CD4-positive, alpha-beta T cell (primary cell): ENCODE measurements at regions of chr17 and their contacts with region 1.

Region 1: GRCh38 chr17:7856883-7857723 is at the start of gene NAA38:
- DNase-seq: peak; percentile 86 to 99 (median 91)
- ATAC-seq: peak; percentile 82
- H3K4me3 ChIP-seq: peak within 1 kb of the TSS; percentile 74
- H3K4me3 Mint-ChIP-seq: no peak within 1 kb of the TSS
- H3K27ac ChIP-seq: peak within 1 kb of the TSS; percentile 84 to 96
- H3K27ac Mint-ChIP-seq: no peak within 1 kb of the TSS
- H3K4me1 ChIP-seq: peaks cover 39% of the 10 kb centered on the region
- H3K4me1 Mint-ChIP-seq: peaks cover under 1% of the 10 kb centered on the region
- H3K27me3 ChIP-seq: no peaks in the 10 kb centered on the region
- H3K27me3 Mint-ChIP-seq: no peaks in the 10 kb centered on the region
- CTCF ChIP-seq: no peak
- total RNA-seq, gene NAA38: 15.4 to 16.3 TPM

Region 2: GRCh38 chr17:7035591-7036368 is 821.3 kb before region 1 on chr17 and contains the start of gene SLC16A13:
- CTCF ChIA-PET with region 1: no interaction called
- POLR2A ChIA-PET with region 1: no interaction called
- intact Hi-C with region 1: loop called in 1 of 2 experiments (anchors 10 kb)
- DNase-seq: peak; percentile 94 to 100 (median 98)
- ATAC-seq: peak; percentile 90
- H3K4me3 ChIP-seq: peak within 1 kb of the TSS; percentile 99
- H3K4me3 Mint-ChIP-seq: peak within 1 kb of the TSS; percentile 91
- H3K27ac ChIP-seq: peak within 1 kb of the TSS; percentile 84 to 93
- H3K27ac Mint-ChIP-seq: peak within 1 kb of the TSS; percentile 99
- H3K4me1 ChIP-seq: peaks cover 57% of the 10 kb centered on the region
- H3K4me1 Mint-ChIP-seq: peaks cover 63% of the 10 kb centered on the region
- H3K27me3 ChIP-seq: no peaks in the 10 kb centered on the region
- H3K27me3 Mint-ChIP-seq: no peaks in the 10 kb centered on the region
- CTCF ChIP-seq: no peak
- total RNA-seq, gene SLC16A13: 2.3 to 2.4 TPM

Region 3: DNA sequence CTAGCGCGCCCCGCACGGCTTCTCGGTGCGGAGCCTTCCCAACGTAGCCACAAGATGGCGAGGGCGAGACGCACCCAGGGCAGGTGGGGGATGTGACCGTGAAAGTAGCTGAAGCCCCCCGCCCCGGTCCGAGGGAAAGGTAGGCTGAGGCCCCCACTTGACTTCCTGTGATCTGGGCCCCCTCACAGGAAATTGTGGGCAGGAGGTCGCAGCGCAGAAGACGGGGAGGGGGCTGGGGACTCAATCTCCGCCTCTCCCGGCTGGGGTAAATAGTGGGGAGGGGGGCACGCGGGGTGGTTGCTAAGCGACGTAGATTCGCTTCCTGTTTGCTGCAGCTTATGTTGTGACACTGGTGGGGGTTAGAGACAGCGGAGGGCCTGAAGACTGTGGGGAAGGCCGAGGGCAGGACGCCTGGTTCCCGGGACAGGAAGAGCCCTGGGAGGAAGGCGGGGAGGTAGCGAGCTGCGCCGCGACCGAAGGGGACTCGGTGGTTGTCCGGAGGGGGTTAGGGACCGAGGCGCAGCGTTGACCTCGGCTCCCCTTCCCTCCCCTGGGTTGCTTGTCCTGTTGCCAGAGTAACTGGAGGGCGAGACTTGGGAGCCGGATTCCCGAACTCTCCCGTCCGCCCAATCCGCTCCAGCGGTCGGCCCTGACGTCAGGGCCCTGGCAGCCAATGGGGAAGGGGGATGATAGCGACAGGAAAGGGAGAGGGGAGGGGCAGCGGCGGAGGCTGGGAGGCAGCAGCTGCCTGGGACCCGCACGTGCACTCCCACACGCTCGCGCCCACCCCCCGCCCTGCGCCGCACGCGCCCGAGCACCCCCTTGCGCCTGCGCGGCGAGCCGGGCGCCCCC is 21.9 kb before region 1 on chr17:
- CTCF ChIA-PET with region 1: interaction called, 13 read pairs
- POLR2A ChIA-PET with region 1: interaction called, 79 read pairs
- intact Hi-C with region 1: loop called (anchors 1 kb)
- DNase-seq: peak; percentile 74 to 98 (median 86)
- ATAC-seq: peak; percentile 54
- H3K4me3 ChIP-seq: peak overlapping the region; percentile 82
- H3K4me3 Mint-ChIP-seq: peak overlapping the region; percentile 93
- H3K27ac ChIP-seq: peak overlapping the region; percentile 98 to 100
- H3K27ac Mint-ChIP-seq: peak overlapping the region; percentile 98
- H3K4me1 ChIP-seq: peaks cover 62% of the 10 kb centered on the region
- H3K4me1 Mint-ChIP-seq: peaks cover 42% of the 10 kb centered on the region
- H3K27me3 ChIP-seq: no peaks in the 10 kb centered on the region
- H3K27me3 Mint-ChIP-seq: peaks cover 4% of the 10 kb centered on the region
- CTCF ChIP-seq: peak; percentile 84

Region 4: DNA sequence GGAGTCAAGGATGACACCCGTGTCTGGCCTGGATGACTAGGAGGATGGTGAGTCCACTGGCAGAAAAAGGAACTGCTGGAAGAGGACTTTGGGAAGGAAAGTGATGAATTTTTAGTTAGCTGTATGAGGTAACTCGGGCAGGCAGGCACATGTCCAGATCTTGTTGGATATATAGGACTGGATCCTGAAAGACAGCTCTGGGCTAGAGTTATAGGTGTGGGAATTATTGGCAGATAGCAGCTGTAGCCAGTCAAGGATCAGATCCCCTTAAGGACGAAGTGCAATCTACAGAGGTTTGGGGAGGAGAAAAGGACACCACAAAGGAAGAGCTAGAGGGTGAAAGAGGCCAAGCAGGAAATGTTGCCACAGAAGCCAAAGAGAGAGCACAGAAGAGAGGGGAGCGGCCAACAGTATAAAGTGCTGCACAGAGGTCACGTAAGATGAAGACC is 10.8 kb after region 1 on chr17:
- CTCF ChIA-PET with region 1: interaction called, 11 read pairs
- POLR2A ChIA-PET with region 1: interaction called, 20 read pairs
- intact Hi-C with region 1: no loop called
- DNase-seq: peak in 3 of 14 experiments; percentile 38 to 49 (median 47)
- ATAC-seq: peak; percentile 78
- H3K4me3 ChIP-seq: peak overlapping the region; percentile 26
- H3K4me3 Mint-ChIP-seq: peak overlapping the region; percentile 9
- H3K27ac ChIP-seq: peak overlapping the region in 1 of 2 donors; percentile 52
- H3K27ac Mint-ChIP-seq: peak overlapping the region; percentile 62
- H3K4me1 ChIP-seq: peaks cover 20% of the 10 kb centered on the region
- H3K4me1 Mint-ChIP-seq: peaks cover 32% of the 10 kb centered on the region
- H3K27me3 ChIP-seq: no peaks in the 10 kb centered on the region
- H3K27me3 Mint-ChIP-seq: no peaks in the 10 kb centered on the region
- CTCF ChIP-seq: no peak

Region 5: DNA sequence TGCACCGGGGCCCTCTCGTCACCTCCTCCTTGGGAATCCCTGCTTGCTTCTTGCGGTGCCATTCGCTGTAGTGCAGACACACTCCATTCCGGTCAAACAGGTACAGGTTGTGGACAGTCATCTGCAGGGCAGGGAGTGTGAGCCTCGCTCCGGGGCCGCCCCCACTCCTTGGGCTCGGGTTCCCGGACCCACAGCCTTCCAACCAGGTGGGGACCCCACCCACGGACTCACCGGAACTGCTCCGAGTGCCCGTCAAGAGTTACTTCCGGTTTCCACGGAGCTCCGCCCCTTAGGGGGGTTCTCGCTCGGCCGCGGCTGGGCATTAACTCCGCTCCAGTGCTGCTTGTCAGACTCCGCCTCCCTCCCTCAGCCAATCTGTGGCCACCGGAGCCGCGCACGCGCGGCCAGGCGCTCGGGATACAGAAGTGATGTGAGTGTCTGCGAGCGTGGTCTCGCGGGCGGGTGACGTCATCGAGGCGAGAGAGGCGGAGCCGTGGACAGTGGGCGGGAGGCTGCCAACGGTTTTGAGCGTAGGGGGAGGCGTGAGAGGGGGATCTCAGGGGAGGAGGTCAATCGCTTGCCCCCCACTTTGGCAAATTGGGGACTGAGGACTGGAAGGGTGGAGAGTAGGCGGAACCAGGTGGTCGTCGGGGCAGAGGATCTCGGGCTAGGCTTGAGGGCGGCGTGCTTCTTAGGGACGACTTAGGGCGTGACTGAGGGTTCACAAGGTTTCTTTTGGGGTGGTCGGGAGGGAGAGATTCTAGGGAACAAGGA is 74.8 kb after region 1 on chr17 and contains the starts of genes CNTROB and TRAPPC1:
- CTCF ChIA-PET with region 1: no interaction called
- POLR2A ChIA-PET with region 1: interaction called, 19 read pairs
- intact Hi-C with region 1: no loop called
- DNase-seq: peak; percentile 97 to 100 (median 99)
- ATAC-seq: peak; percentile 92
- H3K4me3 ChIP-seq: peak within 1 kb of the TSS; percentile 94
- H3K4me3 Mint-ChIP-seq: peak within 1 kb of the TSS; percentile 97
- H3K27ac ChIP-seq: peak within 1 kb of the TSS; percentile 83
- H3K27ac Mint-ChIP-seq: peak within 1 kb of the TSS; percentile 90
- H3K4me1 ChIP-seq: peaks cover 40% of the 10 kb centered on the region
- H3K4me1 Mint-ChIP-seq: peaks cover 49% of the 10 kb centered on the region
- H3K27me3 ChIP-seq: no peaks in the 10 kb centered on the region
- H3K27me3 Mint-ChIP-seq: no peaks in the 10 kb centered on the region
- CTCF ChIP-seq: no peak
- total RNA-seq, gene CNTROB: 20.6 to 21.9 TPM
- total RNA-seq, gene TRAPPC1: 39.3 to 39.5 TPM